ENCODE measurements at regions of chr6 and their contacts with region 1.

Region 1: DNA sequence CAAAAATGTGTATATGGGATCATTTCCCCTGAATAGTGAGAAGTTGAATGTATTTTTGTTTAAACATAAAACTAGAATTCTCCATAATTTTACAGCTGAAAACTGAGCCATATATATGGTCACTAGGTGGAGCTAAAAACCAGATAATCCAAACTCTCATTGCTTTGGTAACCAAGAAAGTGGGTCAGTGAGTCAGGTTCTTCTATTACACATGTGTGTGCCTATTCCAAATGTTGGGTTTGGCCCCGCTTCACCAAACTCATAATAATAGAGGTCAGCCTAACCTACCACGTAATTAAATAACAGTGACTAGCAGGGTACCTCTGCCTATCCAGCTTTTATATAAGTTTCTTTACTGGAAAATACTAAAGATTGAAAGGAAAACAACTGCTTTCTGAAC is 19.3 kb upstream of the RNGTT start:
- DNase-seq: peak in 1 of 10 donors; percentile 26
- H3K4me3 ChIP-seq: peak overlapping the region in 30 of 59 donors; percentile 2 to 47 (median 23)
- H3K27ac ChIP-seq: peak overlapping the region in 1 of 59 donors; percentile 40
- H3K27me3 ChIP-seq: no peaks in the 10 kb centered on the region
- CTCF ChIP-seq: peak; percentile 66 to 95 (median 82)

Region 2: GRCh38 chr6:89145787-89146646 is 163.3 kb after region 1 on chr6 and contains the start of gene PM20D2:
- intact Hi-C with region 1: loop called in 1 of 2 experiments (anchors 5 kb)
- DNase-seq: peak in 8 of 10 donors; percentile 37 to 77 (median 60)
- H3K4me3 ChIP-seq: peak within 1 kb of the TSS; percentile 59 to 96 (median 86)
- H3K27ac ChIP-seq: peak within 1 kb of the TSS in 56 of 59 donors; percentile 23 to 94 (median 76)
- H3K27me3 ChIP-seq: no peaks in the 10 kb centered on the region
- CTCF ChIP-seq: peak in 2 of 56 donors; percentile 4 to 20
- total RNA-seq, gene PM20D2: 4.7 to 11.2 (median 8.2) TPM

Region 3: DNA sequence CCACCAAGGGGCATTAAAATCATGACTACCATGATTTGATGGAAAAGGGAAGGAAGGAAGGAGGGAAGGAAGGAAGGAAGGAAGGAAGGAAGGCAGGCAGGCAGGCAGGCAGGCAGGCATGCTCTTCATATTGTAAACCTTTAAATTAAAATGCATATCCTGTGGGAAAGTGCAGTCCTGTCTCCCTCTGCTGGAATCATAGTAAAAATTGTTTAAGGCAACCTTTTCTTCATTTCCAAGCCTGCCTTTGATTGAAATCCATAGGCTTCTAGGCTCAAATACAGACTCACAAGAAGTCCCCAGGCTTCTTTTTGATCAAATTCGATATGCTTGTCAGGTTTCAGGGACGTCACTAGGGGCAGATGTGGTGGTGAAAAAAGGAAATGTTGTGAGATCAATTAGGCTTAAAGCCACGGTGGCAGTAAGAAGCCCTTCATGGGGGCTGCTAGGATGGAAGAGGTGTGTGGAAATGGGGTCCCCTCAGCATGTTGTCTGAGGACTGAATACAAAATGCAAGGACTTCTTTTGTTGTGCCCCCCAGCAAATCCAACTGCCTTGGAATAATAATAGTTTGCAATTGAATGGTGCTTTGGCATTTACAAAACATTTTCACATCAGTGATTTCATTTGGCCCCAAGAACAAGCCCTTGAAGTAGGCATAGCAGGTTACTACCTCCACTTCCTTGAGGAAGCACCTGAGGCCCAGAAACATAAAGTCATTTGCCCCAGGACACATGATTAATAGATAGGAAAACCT is 260.0 kb after region 1 on chr6:
- intact Hi-C with region 1: loop called (anchors 2 to 5 kb)
- DNase-seq: no peak
- H3K4me3 ChIP-seq: no peak overlapping the region
- H3K27ac ChIP-seq: no peak overlapping the region
- H3K27me3 ChIP-seq: peaks cover 0 to 2% (median 0%) of the 10 kb centered on the region in 45 donors
- CTCF ChIP-seq: peak in 52 of 56 donors; percentile 5 to 70 (median 46)

Measured in dorsolateral prefrontal cortex (tissue), 120 donors.